Naive thymus-derived CD4-positive, alpha-beta T cell (primary cell): ENCODE measurements at regions of chr1 and their contacts with region 1.

Region 1: DNA sequence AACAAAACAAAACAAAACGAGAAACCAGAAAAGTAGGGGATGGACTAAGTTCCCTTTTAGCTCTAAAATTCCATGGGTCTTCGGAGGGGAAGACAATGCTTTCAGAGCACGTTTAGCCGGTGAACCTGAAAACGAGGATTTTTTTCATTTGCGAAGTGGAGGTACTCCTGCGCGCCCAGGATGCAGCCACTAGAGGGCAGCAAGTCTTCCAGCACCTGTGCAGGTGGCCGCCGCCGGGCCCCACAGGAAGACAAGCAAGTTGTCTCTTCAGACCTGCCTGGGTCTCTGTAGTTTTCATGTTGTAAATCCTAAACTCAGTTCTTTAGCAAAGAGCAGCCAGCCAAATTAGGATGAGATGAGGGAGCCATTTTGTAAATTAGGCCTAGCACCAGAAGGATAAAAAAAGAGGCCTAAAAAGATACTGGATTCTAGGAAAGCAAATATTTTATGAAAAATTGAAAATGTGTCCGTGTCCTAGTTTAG is 17.7 kb upstream of the SNX27 start:
- DNase-seq: peak; percentile 67 to 89 (median 84)
- ATAC-seq: peak; percentile 99
- H3K4me3 ChIP-seq: no peak overlapping the region
- H3K4me3 Mint-ChIP-seq: peak overlapping the region; percentile 18 to 83 (median 77)
- H3K27ac ChIP-seq: no peak overlapping the region
- H3K27ac Mint-ChIP-seq: peak overlapping the region in 8 of 9 donors; percentile 22 to 84 (median 61)
- H3K4me1 ChIP-seq: peaks cover 0 to 6% of the 10 kb centered on the region in 2 donors
- H3K4me1 Mint-ChIP-seq: peaks cover 2 to 17% (median 11%) of the 10 kb centered on the region in 7 donors
- H3K27me3 ChIP-seq: no peaks in the 10 kb centered on the region
- H3K27me3 Mint-ChIP-seq: peaks cover 0 to 27% (median 8%) of the 10 kb centered on the region in 5 donors

Region 2: GRCh38 chr1:151510957-151511635 is 83.1 kb before region 1 on chr1 and contains the start of gene CGN:
- CTCF ChIA-PET with region 1: no interaction called
- POLR2A ChIA-PET with region 1: no interaction called
- intact Hi-C with region 1: no loop called
- DNase-seq: peak; percentile 72 to 90 (median 84)
- ATAC-seq: peak; percentile 99
- H3K4me3 ChIP-seq: peak within 1 kb of the TSS; percentile 89
- H3K4me3 Mint-ChIP-seq: peak within 1 kb of the TSS; percentile 90 to 99 (median 94)
- H3K27ac ChIP-seq: peak within 1 kb of the TSS; percentile 65
- H3K27ac Mint-ChIP-seq: peak within 1 kb of the TSS; percentile 38 to 93 (median 86)
- H3K4me1 ChIP-seq: peaks cover 13 to 18% of the 10 kb centered on the region in 2 donors
- H3K4me1 Mint-ChIP-seq: peaks cover 12 to 36% (median 25%) of the 10 kb centered on the region in 7 donors
- H3K27me3 ChIP-seq: no peaks in the 10 kb centered on the region
- H3K27me3 Mint-ChIP-seq: peaks cover 0 to 38% (median 0%) of the 10 kb centered on the region in 5 donors
- total RNA-seq, gene CGN: 0.29 to 2.4 (median 1.3) TPM in 4 of 5 experiments, not detected in the other

Region 3: GRCh38 chr1:151534665-151535278 is 59.4 kb before region 1 on chr1:
- CTCF ChIA-PET with region 1: interaction called, 3 read pairs
- POLR2A ChIA-PET with region 1: no interaction called
- intact Hi-C with region 1: loop called in 1 of 2 experiments (anchors 1 kb)
- DNase-seq: peak; percentile 28 to 78 (median 59)
- ATAC-seq: peak; percentile 88
- H3K4me3 ChIP-seq: no peak overlapping the region
- H3K4me3 Mint-ChIP-seq: no peak overlapping the region
- H3K27ac ChIP-seq: no peak overlapping the region
- H3K27ac Mint-ChIP-seq: peak overlapping the region in 1 of 9 donors; percentile 67
- H3K4me1 ChIP-seq: peaks cover 6% of the 10 kb centered on the region in 2 donors
- H3K4me1 Mint-ChIP-seq: peaks cover 0 to 8% (median 3%) of the 10 kb centered on the region in 7 donors
- H3K27me3 ChIP-seq: no peaks in the 10 kb centered on the region
- H3K27me3 Mint-ChIP-seq: peaks cover 0 to 4% (median 0%) of the 10 kb centered on the region in 5 donors

Region 4: DNA sequence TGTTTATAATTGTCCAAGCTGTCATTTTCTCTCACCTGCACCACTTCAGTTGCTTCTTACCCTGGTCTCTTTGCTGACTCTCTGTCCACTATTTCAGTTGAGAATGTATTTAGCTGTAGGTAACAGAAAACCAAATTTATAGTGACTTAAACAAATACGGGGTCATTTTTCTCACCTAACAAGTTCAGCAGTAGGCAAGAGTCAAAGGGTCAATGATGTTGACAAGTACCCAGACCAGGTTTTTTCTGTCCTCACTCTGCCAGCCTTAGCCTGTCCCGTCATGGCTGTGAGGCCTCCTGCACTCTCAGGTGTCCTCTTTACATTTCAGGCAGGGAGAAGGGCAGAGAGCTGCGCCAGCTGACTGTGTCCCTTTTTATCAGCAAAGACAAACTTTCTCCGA is 138.9 kb after region 1 on chr1:
- CTCF ChIA-PET with region 1: interaction called, 22 read pairs
- POLR2A ChIA-PET with region 1: no interaction called
- intact Hi-C with region 1: loop called in 1 of 2 experiments (anchors 1 kb)
- DNase-seq: no peak
- ATAC-seq: no peak
- H3K4me3 ChIP-seq: no peak overlapping the region
- H3K4me3 Mint-ChIP-seq: no peak overlapping the region
- H3K27ac ChIP-seq: no peak overlapping the region
- H3K27ac Mint-ChIP-seq: no peak overlapping the region
- H3K4me1 ChIP-seq: no peaks in the 10 kb centered on the region
- H3K4me1 Mint-ChIP-seq: peaks cover 0 to 4% (median 0%) of the 10 kb centered on the region in 7 donors
- H3K27me3 ChIP-seq: no peaks in the 10 kb centered on the region
- H3K27me3 Mint-ChIP-seq: peaks cover 22 to 41% (median 24%) of the 10 kb centered on the region in 5 donors

Region 5: DNA sequence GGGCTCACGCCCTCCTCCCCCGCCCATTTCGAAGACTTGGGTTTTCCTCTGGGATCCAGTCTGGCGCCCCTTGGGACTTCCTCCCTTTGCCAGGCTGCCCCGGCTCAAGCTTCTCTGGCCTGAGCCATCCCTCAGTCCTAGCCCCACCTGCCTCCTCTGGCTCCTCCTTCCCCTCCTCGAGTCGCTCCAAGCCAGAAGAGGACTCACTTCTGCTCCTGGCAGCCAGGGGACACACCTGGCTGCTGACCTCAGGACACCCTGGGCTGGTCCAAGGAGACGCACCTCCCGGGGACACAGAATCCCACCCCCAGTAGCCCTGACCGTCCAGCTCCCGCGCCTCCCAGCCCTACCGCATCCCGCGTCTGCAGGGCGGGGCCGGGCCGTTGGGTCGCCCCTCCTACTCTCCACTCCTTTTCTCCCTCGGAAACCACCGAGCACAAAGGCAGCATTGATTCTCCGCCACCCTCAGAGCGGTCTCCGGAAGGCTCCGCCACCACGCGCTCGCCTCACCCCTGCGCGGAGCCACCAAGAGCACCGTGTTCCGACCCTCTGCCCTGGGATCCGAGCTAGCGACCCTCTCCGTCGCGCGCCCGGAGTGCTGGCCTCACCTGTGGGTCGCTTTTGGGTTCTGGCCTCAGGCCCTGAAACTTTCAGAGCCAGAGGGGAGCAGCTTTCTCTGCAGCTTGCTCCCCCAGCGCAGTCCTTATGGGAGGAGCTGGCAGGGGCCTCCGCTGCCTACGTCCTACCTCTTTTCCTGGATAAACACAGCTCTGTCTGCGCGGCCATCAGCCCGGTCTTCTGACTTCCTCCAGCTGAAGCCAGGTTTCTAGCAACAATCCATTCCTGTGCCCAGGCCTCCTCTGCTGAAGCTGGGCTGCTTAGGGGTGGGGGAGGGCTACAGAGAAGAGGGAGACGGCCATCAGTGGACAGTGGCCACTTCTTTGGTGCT is 245.5 kb after region 1 on chr1 and contains the start of gene C2CD4D:
- CTCF ChIA-PET with region 1: interaction called, 9 read pairs
- POLR2A ChIA-PET with region 1: no interaction called
- intact Hi-C with region 1: loop called in 1 of 2 experiments (anchors 1 kb)
- DNase-seq: peak; percentile 42 to 77 (median 66)
- ATAC-seq: peak; percentile 89
- H3K4me3 ChIP-seq: peak within 1 kb of the TSS; percentile 68
- H3K4me3 Mint-ChIP-seq: peak within 1 kb of the TSS; percentile 68 to 89 (median 82)
- H3K27ac ChIP-seq: peak within 1 kb of the TSS; percentile 55
- H3K27ac Mint-ChIP-seq: peak within 1 kb of the TSS; percentile 31 to 87 (median 77)
- H3K4me1 ChIP-seq: peaks cover 27 to 38% of the 10 kb centered on the region in 2 donors
- H3K4me1 Mint-ChIP-seq: peaks cover 33 to 53% (median 40%) of the 10 kb centered on the region in 7 donors
- H3K27me3 ChIP-seq: no peaks in the 10 kb centered on the region
- H3K27me3 Mint-ChIP-seq: peaks cover 0 to 8% (median 0%) of the 10 kb centered on the region in 5 donors
- total RNA-seq, gene C2CD4D: 0.34 to 0.87 TPM in 2 of 5 experiments, not detected in the others

Region 6: DNA sequence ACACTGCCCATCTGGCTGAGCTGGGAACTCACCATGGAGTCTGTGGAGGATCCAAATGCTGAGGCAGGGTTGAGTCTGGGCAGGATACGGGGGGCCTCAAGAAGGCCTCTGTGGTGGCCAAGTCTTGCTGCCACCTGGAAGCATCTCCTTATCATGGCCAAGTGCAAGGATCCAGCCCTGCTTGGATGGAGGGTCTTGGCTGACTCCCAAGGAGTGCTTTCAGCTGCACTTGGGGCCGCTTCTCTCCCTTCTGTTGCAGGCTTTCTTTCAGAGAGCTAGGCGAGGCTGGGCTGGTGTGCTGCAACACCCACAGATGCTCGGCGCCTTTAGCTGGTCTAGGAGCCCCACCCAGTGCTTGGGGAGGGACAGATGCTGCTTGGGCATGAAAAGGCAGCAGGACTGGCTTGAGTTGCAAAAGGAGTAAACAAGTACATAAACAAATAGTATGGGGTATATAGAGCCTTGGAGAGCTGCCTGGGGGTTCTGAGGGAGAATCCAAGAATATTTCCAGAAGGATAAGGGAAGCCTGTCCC is 259.3 kb after region 1 on chr1 and contains the start of gene THEM5:
- CTCF ChIA-PET with region 1: no interaction called
- POLR2A ChIA-PET with region 1: no interaction called
- intact Hi-C with region 1: no loop called
- DNase-seq: no peak
- ATAC-seq: no peak
- H3K4me3 ChIP-seq: no peak within 1 kb of the TSS
- H3K4me3 Mint-ChIP-seq: no peak within 1 kb of the TSS
- H3K27ac ChIP-seq: no peak within 1 kb of the TSS
- H3K27ac Mint-ChIP-seq: no peak within 1 kb of the TSS
- H3K4me1 ChIP-seq: no peaks in the 10 kb centered on the region
- H3K4me1 Mint-ChIP-seq: peaks cover 0 to 11% (median 0%) of the 10 kb centered on the region in 7 donors
- H3K27me3 ChIP-seq: no peaks in the 10 kb centered on the region
- H3K27me3 Mint-ChIP-seq: peaks cover 0 to 7% (median 0%) of the 10 kb centered on the region in 5 donors
- total RNA-seq, gene THEM5: not detected

Region 7: DNA sequence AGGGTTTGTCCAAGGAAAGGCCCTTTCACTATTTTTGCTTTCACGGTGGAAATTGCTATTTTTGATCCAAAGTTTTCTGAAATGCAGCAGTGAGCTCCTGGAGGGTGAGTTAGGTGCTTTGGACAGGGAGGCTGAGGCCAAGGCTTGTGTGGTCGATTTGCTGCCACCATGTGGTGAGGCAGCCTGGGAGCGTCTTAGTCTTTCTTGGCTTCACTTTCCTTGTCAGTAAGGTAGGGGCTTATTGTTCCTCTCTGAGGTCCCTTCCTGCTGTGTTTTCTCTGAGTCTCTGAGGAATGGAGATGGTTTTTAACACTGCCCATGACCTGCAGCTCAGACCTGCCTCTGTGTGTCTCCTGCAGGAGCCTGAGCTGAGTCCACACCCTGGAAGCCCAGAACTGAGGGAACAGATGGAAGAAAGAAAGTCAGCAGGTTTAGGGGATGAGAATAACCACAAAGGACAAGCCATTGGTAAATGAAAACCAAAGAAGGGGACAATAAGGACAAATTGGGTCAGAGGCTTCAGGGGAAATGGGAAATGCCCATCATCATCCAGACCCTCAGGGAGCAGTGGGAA is 419.6 kb after region 1 on chr1:
- CTCF ChIA-PET with region 1: no interaction called
- POLR2A ChIA-PET with region 1: no interaction called
- intact Hi-C with region 1: loop called in 1 of 2 experiments (anchors 5 kb)
- DNase-seq: peak in 2 of 9 donors; percentile 19 to 43
- ATAC-seq: peak; percentile 42
- H3K4me3 ChIP-seq: no peak overlapping the region
- H3K4me3 Mint-ChIP-seq: no peak overlapping the region
- H3K27ac ChIP-seq: no peak overlapping the region
- H3K27ac Mint-ChIP-seq: no peak overlapping the region
- H3K4me1 ChIP-seq: no peaks in the 10 kb centered on the region
- H3K4me1 Mint-ChIP-seq: peaks cover 0 to 6% (median 4%) of the 10 kb centered on the region in 7 donors
- H3K27me3 ChIP-seq: no peaks in the 10 kb centered on the region
- H3K27me3 Mint-ChIP-seq: peaks cover 0 to 58% (median 9%) of the 10 kb centered on the region in 5 donors